ENCODE measurements at regions of chr1 and their contacts with region 1.

Region 1: DNA sequence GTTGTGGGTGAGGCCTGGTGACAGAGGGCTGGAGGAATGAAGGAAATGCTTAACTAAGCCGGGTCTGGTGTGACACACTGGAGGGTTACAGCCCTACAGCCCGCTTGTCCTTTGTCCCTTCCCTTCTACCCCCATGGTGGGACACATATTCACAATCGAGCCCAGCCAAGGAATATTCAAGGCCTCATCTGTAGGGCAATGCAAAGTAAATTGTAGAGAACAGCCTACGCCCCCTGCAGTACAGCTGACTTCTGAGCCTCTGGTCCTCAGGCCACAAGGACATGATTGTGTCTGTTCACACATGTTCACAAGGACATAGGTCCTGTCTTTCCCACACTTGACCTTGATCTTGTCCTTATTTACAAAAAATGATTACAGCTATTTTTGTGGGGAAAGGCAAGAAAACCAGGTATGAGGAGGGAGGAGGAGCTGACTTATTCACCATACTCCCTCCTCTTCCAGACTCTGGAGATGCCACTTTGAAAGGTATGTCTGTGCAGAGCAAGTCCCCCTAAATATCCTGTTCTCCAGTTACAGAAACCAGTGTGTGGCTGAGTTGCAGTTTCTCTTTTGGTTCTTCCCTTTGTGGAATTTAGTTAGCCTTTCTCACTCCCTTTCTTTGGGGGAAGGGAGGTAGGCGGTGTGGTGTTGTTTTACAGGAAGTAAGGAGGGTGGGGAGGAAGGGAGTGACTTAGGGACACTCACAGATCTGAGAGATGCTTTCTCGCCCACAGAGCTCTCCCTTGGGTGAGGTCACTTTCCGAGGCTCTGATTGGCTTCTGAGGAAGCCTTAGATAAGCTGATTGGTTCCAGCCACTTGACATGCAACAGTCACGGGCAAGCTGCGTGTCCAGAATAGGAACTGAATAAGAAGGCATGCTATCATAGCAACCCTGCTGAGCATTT is 14.6 kb downstream of the POLR3GL start:
- DNase-seq: peak; percentile 82
- H3K4me3 ChIP-seq: peak overlapping the region; percentile 18 to 45; a peak in 3 of 4 replicates
- H3K27ac ChIP-seq: peak overlapping the region; percentile 92 to 99
- H3K4me1 ChIP-seq: peaks cover 27 to 30% of the 10 kb centered on the region in 2 experiments
- H3K27me3 ChIP-seq: no peaks in the 10 kb centered on the region
- CTCF ChIP-seq: peak; percentile 48
- EP300 ChIP-seq: peak; percentile 58 to 74; a peak in 2 of 4 replicates
- RAD21 ChIP-seq: no peak

Region 2: GRCh38 chr1:145963995-145964901 is 14.9 kb before region 1 on chr1 and contains the starts of genes ANKRD34A and POLR3GL:
- CTCF ChIA-PET with region 1: interaction called, 36 read pairs
- POLR2A ChIA-PET with region 1: interaction called, 8 read pairs
- DNase-seq: peak; percentile 86
- H3K4me3 ChIP-seq: peak within 1 kb of the TSS; percentile 77 to 78
- H3K27ac ChIP-seq: peak within 1 kb of the TSS; percentile 83 to 98
- H3K4me1 ChIP-seq: peaks cover 19 to 40% of the 10 kb centered on the region in 2 experiments
- H3K27me3 ChIP-seq: no peaks in the 10 kb centered on the region
- CTCF ChIP-seq: no peak
- EP300 ChIP-seq: no peak
- RAD21 ChIP-seq: no peak
- polyA plus RNA-seq, gene ANKRD34A: 2.6 and 3.6 TPM in 2 replicates
- polyA plus RNA-seq, gene POLR3GL: 15.8 and 17.3 TPM in 2 replicates

Region 3: DNA sequence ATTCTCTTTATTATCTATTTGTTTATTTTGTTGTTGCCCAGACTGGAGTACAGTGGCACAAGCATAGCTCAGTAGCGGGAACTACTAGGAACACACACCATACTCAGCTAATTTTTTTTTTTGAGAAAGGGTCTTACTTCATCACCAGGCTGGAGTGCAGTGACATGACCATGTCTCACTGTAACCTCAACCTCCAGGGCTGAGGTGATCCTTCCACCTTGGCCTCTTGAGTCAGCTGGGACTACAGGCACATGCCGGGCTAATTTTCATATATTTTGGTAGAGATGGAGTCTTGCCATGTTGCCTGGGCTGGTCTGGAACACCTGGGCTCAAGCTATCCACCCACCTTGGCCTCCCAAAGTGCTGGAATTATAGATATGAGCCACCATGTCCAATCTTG is 22.6 kb after region 1 on chr1:
- CTCF ChIA-PET with region 1: interaction called, 187 read pairs
- POLR2A ChIA-PET with region 1: interaction called, 7 read pairs
- DNase-seq: no peak
- H3K4me3 ChIP-seq: no peak overlapping the region
- H3K27ac ChIP-seq: no peak overlapping the region
- H3K4me1 ChIP-seq: peaks cover 6 to 20% of the 10 kb centered on the region in 2 experiments; a peak in 3 of 4 replicates
- H3K27me3 ChIP-seq: no peaks in the 10 kb centered on the region
- CTCF ChIP-seq: no peak
- EP300 ChIP-seq: no peak
- RAD21 ChIP-seq: no peak

Region 4: DNA sequence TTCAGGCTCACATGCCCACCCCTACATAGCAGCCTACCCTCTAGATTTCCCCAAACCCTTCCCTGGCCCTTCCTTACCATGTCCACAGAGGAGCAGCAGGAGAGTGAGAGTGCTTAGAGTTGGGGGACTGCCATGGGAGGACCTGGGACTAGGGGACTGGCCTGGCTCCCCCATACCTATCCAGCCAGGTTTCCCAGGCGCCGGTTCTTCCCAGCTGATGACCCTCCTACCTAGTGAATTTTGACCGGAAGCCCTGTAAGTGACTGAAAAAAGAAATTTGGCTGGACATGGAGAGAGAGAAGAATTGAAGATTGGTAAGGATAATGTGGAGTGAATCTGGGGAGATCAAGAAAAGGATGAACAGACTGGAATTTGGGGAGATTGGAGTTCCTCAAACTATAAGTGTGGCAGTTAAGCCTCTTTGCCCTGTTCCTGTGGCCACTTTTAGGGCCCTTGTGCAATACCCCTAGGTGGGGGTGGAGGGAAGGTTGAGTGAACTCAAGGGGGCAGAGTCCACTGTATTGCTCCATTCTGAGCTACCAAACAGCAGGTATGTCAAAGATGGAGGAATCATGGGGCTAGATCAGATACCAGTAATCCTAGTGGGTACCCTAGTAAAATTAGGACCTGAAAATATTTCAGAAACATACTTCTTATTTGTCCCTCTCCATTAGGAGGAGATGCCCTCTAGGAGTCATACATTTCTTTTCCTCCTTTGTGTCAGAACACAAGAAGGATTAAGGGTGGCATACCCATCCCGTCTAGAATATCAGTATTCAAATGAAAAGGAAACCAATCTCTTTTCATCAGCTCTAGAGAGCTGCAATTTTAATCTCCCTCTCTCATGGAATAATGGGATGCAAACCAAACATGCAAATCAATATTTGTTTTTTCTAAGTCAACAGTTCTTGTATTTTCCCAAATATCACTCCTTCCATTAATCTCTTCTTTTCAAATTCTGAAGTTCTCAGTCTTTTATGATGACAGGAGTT is 41.2 kb after region 1 on chr1:
- CTCF ChIA-PET with region 1: interaction called, 10 read pairs
- POLR2A ChIA-PET with region 1: no interaction called
- DNase-seq: no peak
- H3K4me3 ChIP-seq: no peak overlapping the region
- H3K27ac ChIP-seq: no peak overlapping the region
- H3K4me1 ChIP-seq: peaks cover 2 to 9% of the 10 kb centered on the region in 2 experiments; a peak in 3 of 4 replicates
- H3K27me3 ChIP-seq: no peaks in the 10 kb centered on the region
- CTCF ChIP-seq: no peak
- EP300 ChIP-seq: no peak
- RAD21 ChIP-seq: no peak

Region 5: GRCh38 chr1:147515046-147515869 is 1536.2 kb after region 1 on chr1:
- CTCF ChIA-PET with region 1: no interaction called
- POLR2A ChIA-PET with region 1: no interaction called
- DNase-seq: no peak
- H3K4me3 ChIP-seq: no peak overlapping the region
- H3K27ac ChIP-seq: no peak overlapping the region
- H3K4me1 ChIP-seq: peaks cover 0 to 3% of the 10 kb centered on the region in 2 experiments; a peak in 2 of 4 replicates
- H3K27me3 ChIP-seq: no peaks in the 10 kb centered on the region
- CTCF ChIP-seq: peak; percentile 21
- EP300 ChIP-seq: no peak
- RAD21 ChIP-seq: peak; percentile 55

Measured in SK-N-SH (cell line).